ENCODE measurements at regions of chr3 and their contacts with region 1.

Region 1: DNA sequence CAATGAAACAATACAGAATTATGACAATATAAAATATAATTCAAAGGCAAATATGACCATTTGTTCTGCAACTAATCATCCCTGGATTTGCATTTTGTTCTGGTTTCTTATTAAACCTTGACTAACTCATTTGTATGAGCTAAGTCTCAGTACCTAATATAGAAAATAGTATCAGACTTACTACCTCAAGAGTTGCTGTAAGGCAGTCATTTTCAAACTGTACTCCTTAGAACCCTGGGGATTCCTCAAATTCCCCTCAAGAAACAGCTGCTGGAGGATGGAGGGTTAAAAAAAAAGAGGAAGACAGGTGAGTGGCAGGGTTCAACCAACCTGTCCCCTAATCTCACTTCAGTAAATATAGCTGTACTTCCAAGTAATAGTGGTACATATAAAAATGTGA is 11.1 kb downstream of the ZBTB11 start:
- DNase-seq: no peak
- ATAC-seq: no peak
- H3K4me3 ChIP-seq: no peak overlapping the region
- H3K4me3 Mint-ChIP-seq: no peak overlapping the region
- H3K27ac ChIP-seq: no peak overlapping the region
- H3K27ac Mint-ChIP-seq: no peak overlapping the region
- H3K4me1 ChIP-seq: no peaks in the 10 kb centered on the region
- H3K4me1 Mint-ChIP-seq: peaks cover 2 to 8% (median 3%) of the 10 kb centered on the region in 3 donors
- H3K27me3 ChIP-seq: no peaks in the 10 kb centered on the region
- H3K27me3 Mint-ChIP-seq: no peaks in the 10 kb centered on the region

Region 2: DNA sequence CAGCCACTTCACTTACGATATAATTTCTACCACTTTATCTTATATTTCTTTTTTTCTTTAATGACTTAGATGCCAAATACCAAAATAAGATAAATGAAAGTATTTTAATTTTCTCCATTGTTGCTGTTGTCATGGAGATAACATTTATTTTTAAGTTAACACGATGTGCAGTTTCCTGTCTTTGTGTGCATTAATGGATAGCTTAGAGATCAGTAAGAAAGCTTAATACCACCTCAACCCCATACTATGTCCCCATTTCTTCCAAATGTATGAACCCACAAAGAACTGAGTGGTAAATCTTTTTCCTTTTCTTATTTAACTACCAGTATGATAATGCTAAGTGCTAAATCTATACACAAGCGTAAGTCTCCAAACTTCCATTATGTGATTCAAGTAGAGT is 74.8 kb before region 1 on chr3:
- CTCF ChIA-PET with region 1: interaction called in 1 of 2 experiments, 11 read pairs
- POLR2A ChIA-PET with region 1: no interaction called
- DNase-seq: no peak
- ATAC-seq: peak in 1 of 4 experiments; percentile 40
- H3K4me3 ChIP-seq: no peak overlapping the region
- H3K4me3 Mint-ChIP-seq: no peak overlapping the region
- H3K27ac ChIP-seq: no peak overlapping the region
- H3K27ac Mint-ChIP-seq: peak overlapping the region; percentile 64 to 74
- H3K4me1 ChIP-seq: no peaks in the 10 kb centered on the region
- H3K4me1 Mint-ChIP-seq: peaks cover 27 to 37% (median 30%) of the 10 kb centered on the region in 3 donors
- H3K27me3 ChIP-seq: no peaks in the 10 kb centered on the region
- H3K27me3 Mint-ChIP-seq: no peaks in the 10 kb centered on the region

Region 3: DNA sequence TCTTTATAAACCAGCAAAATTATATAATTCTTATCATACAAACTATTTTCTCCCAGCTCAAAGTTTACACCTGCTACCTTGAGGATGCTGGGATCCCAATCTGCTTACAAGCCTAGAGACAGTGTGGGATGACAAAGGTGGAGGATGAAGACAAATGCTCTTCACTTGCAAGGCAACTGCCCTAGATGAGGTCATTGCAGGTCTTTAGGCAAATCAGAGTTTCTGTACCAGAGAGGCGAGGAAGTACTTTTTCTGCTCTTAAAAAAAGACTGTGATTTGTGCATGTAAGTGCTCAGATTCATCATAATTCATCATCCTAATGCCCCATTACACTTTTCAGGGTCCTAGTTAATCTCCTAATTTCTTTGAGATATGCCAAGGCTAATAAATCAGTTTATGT is 1145.1 kb after region 1 on chr3:
- CTCF ChIA-PET with region 1: no interaction called
- POLR2A ChIA-PET with region 1: no interaction called
- DNase-seq: no peak
- ATAC-seq: no peak
- H3K4me3 ChIP-seq: no peak overlapping the region
- H3K4me3 Mint-ChIP-seq: no peak overlapping the region
- H3K27ac ChIP-seq: no peak overlapping the region
- H3K27ac Mint-ChIP-seq: no peak overlapping the region
- H3K4me1 ChIP-seq: no peaks in the 10 kb centered on the region
- H3K4me1 Mint-ChIP-seq: no peaks in the 10 kb centered on the region
- H3K27me3 ChIP-seq: no peaks in the 10 kb centered on the region
- H3K27me3 Mint-ChIP-seq: no peaks in the 10 kb centered on the region

Measured in T-cell (primary cell).